Upper lobe of right lung (tissue), 1 donor: ENCODE measurements at regions of chr3 and their contacts with region 1.

Region 1: GRCh38 chr3:161413127-161413849 is 42.0 kb upstream of the SPTSSB start:
- DNase-seq: no peak
- ATAC-seq: no peak
- H3K4me3 ChIP-seq: no peak overlapping the region
- H3K27ac ChIP-seq: no peak overlapping the region
- H3K4me1 ChIP-seq: peaks cover 3% of the 10 kb centered on the region
- H3K27me3 ChIP-seq: no peaks in the 10 kb centered on the region
- CTCF ChIP-seq: no peak

Region 2: GRCh38 chr3:161274719-161275298 is 138.5 kb before region 1 on chr3:
- intact Hi-C with region 1: loop called (anchors 10 kb)
- DNase-seq: no peak
- ATAC-seq: peak; percentile 71
- H3K4me3 ChIP-seq: no peak overlapping the region
- H3K27ac ChIP-seq: no peak overlapping the region
- H3K4me1 ChIP-seq: no peaks in the 10 kb centered on the region
- H3K27me3 ChIP-seq: no peaks in the 10 kb centered on the region
- CTCF ChIP-seq: peak; percentile 62